MCF 10A (cell line): ENCODE measurements at regions of chr15 and their contacts with region 1.

Region 1: GRCh38 chr15:34209421-34210282 is at the start of gene KATNBL1:
- DNase-seq: peak; percentile 95
- H3K4me3 Mint-ChIP-seq: peak within 1 kb of the TSS; percentile 80
- H3K27ac Mint-ChIP-seq: peak within 1 kb of the TSS; percentile 93
- H3K4me1 Mint-ChIP-seq: peaks cover 17% of the 10 kb centered on the region
- H3K27me3 Mint-ChIP-seq: no peaks in the 10 kb centered on the region
- CTCF ChIP-seq: peak; percentile 77
- total RNA-seq, gene KATNBL1: 38.2 and 47.6 TPM in 2 replicates

Region 2: DNA sequence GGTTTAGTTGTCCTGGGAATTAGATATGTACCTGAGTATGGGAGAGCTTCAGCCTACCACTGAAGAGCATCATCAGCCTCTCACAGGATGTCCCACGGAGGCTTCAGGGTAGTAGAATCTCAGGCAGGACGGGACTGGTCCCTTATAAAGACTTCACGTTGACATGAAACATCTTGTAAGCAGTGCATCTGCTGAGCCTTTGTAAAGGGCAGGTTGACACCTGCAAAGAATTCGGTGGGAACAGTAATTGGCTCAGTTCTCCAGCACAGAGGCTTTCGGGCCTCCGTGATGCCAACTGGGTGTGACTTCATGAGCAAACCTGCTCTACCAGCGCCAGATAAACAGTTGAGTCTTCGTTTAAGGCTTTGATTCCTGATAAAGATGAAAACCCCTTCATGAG is 143.7 kb before region 1 on chr15:
- CTCF ChIA-PET with region 1: interaction called, 64 read pairs
- POLR2A ChIA-PET with region 1: interaction called, 14 read pairs
- intact Hi-C with region 1: loop called (anchors 1 kb)
- DNase-seq: peak; percentile 11
- H3K4me3 Mint-ChIP-seq: no peak overlapping the region
- H3K27ac Mint-ChIP-seq: no peak overlapping the region
- H3K4me1 Mint-ChIP-seq: peaks cover 6% of the 10 kb centered on the region
- H3K27me3 Mint-ChIP-seq: no peaks in the 10 kb centered on the region
- CTCF ChIP-seq: no peak

Region 3: DNA sequence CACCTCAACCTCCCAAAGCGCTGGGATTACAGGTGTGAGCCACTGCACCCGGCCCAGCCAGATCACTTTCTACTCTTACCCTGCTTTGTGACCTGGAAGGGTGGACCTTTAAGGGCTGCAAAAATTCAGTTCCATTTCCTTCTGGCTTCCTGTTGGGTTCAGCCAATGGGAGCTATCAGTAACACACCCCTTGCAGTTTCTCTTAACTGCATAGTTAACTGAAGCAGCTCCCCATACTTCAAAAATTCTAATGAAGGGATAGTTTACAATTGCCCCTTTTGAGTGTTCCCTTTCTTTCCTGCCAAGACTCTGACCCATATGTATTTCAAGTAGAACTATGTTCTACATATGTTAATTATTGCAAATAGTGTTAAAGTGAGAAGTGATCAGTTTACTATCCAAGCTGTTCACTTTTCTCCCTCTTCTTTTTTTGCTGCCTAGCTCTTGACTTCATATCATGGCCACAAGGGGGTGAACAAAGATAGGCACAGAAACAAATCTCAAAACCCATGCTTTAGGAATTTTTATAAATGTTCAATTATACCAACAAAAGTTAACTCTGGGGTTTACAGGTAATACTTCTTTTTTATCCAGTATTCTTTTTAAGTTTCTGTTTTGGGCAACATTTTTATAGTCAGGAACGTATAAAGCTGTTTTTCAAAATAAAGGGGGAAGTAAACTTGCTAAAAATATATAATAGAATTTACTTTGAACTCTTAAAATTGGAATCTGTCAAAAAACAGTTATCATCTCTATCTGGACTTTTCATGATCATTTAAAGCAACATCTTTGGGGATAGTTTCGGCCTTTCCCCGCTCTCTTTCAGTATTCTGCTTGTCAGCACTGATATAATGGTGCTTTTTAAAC is 99.6 kb before region 1 on chr15:
- CTCF ChIA-PET with region 1: interaction called, 46 read pairs
- POLR2A ChIA-PET with region 1: interaction called, 11 read pairs
- intact Hi-C with region 1: loop called (anchors 1 kb)
- DNase-seq: peak; percentile 59
- H3K4me3 Mint-ChIP-seq: no peak overlapping the region
- H3K27ac Mint-ChIP-seq: no peak overlapping the region
- H3K4me1 Mint-ChIP-seq: no peaks in the 10 kb centered on the region
- H3K27me3 Mint-ChIP-seq: no peaks in the 10 kb centered on the region
- CTCF ChIP-seq: peak; percentile 64

Region 4: DNA sequence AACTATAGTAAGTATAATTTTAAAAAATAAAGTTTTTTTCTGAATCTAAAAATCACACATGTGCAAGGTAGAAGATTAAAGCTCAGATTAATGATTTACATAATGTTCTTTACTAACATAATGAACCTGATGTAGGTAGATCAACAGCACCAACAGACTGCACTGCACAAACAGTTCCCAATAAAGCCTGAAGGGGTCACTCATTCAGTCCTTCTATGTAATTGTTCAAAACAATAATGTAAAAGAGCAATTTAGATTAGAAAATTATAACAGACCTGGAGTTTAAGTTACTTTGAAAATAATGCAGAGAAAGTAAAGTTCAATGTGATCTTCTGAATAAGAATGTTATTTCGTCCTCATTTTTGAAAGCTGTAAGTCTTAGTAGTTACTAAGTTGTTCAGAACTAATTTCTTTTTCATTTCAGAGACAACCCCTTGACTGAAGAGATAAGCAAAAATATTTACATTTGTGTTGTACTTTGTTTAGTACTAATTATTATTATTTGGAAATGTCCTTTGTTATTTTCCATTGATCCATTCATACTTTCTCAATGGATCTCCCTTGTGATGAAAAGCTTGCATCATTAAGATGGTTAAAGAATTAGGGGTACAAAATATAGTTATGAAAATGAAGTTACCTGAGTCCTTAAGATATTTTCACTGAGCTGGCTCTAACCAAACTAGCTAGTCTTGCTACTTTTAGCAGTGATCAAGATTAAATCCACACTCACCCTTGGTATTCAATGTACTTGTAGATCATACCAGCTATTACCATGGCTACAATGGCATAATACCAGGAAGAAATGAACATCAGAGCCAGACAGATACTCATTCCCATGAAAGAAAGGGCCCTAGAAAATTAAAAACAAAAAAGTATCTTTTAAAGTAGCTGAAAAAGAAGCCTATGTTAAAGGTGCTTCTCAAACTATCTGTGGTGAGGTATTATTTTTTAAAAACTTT is 32.0 kb after region 1 on chr15:
- CTCF ChIA-PET with region 1: interaction called, 12 read pairs
- POLR2A ChIA-PET with region 1: interaction called, 3 read pairs
- intact Hi-C with region 1: no loop called
- DNase-seq: peak; percentile 64
- H3K4me3 Mint-ChIP-seq: no peak overlapping the region
- H3K27ac Mint-ChIP-seq: no peak overlapping the region
- H3K4me1 Mint-ChIP-seq: peaks cover 13% of the 10 kb centered on the region
- H3K27me3 Mint-ChIP-seq: no peaks in the 10 kb centered on the region
- CTCF ChIP-seq: peak; percentile 68

Region 5: GRCh38 chr15:34259566-34259965 is 49.9 kb after region 1 on chr15:
- CTCF ChIA-PET with region 1: no interaction called
- POLR2A ChIA-PET with region 1: no interaction called
- intact Hi-C with region 1: no loop called
- DNase-seq: no peak
- H3K4me3 Mint-ChIP-seq: no peak overlapping the region
- H3K27ac Mint-ChIP-seq: no peak overlapping the region
- H3K4me1 Mint-ChIP-seq: no peaks in the 10 kb centered on the region
- H3K27me3 Mint-ChIP-seq: no peaks in the 10 kb centered on the region
- CTCF ChIP-seq: no peak

Region 6: GRCh38 chr15:34367101-34368081 is 157.7 kb after region 1 on chr15 and contains the start of gene LPCAT4:
- CTCF ChIA-PET with region 1: interaction called, 16 read pairs
- POLR2A ChIA-PET with region 1: interaction called, 29 read pairs
- intact Hi-C with region 1: no loop called
- DNase-seq: peak; percentile 84
- H3K4me3 Mint-ChIP-seq: peak within 1 kb of the TSS; percentile 79
- H3K27ac Mint-ChIP-seq: peak within 1 kb of the TSS; percentile 70
- H3K4me1 Mint-ChIP-seq: peaks cover 20% of the 10 kb centered on the region
- H3K27me3 Mint-ChIP-seq: no peaks in the 10 kb centered on the region
- CTCF ChIP-seq: peak; percentile 91
- total RNA-seq, gene LPCAT4: 17.0 and 17.4 TPM in 2 replicates